A673 (cell line): ENCODE measurements at regions of chr12 and their contacts with region 1.

Region 1: DNA sequence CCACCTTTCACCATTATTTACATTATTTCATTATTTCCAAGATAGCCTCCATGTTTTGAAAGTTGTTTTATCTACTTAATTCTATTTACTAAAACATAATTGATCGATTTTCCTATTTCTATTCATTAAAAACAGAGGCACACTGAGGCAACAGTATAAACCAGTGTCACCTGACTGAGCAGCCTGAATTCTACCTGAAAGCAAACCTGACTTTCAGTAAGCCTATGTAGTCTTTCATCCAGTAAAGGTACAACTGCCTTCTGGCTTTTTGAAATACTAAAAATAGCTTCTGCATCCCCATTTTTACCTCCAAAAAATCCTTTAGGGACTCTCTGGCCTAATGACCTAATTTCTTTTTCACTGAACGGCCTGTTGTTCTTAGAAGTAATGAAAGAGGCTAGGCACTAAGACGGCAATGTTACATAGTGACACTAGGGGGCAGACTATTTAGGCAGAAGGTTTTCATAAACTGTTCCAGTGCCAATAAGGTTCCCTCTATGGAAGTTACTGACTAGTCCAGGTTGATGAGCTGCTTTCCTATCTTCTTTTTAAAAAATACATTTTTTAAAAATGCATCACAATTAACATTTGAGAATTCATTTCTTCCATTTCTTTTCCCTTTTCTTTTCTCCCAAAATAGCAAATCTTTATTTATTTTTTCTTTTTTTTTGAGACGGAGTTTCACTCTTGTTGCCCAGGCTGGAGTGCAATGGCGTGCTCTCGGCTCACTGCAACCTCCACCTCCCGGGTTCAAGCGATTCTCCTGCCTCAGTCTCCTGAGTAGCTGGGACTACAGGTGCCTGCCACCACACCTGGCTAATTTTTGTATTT is 17.5 kb downstream of the ANAPC5 start:
- DNase-seq: peak; percentile 80
- H3K4me3 ChIP-seq: no peak overlapping the region
- H3K27ac ChIP-seq: no peak overlapping the region
- H3K4me1 ChIP-seq: no peaks in the 10 kb centered on the region
- H3K27me3 ChIP-seq: no peaks in the 10 kb centered on the region
- CTCF ChIP-seq: peak; percentile 92

Region 2: GRCh38 chr12:121060149-121061001 is 274.4 kb before region 1 on chr12:
- CTCF ChIA-PET with region 1: no interaction called
- POLR2A ChIA-PET with region 1: no interaction called
- intact Hi-C with region 1: no loop called
- DNase-seq: peak; percentile 80
- H3K4me3 ChIP-seq: peak overlapping the region; percentile 27
- H3K27ac ChIP-seq: no peak overlapping the region
- H3K4me1 ChIP-seq: no peaks in the 10 kb centered on the region
- H3K27me3 ChIP-seq: no peaks in the 10 kb centered on the region
- CTCF ChIP-seq: peak; percentile 61

Region 3: DNA sequence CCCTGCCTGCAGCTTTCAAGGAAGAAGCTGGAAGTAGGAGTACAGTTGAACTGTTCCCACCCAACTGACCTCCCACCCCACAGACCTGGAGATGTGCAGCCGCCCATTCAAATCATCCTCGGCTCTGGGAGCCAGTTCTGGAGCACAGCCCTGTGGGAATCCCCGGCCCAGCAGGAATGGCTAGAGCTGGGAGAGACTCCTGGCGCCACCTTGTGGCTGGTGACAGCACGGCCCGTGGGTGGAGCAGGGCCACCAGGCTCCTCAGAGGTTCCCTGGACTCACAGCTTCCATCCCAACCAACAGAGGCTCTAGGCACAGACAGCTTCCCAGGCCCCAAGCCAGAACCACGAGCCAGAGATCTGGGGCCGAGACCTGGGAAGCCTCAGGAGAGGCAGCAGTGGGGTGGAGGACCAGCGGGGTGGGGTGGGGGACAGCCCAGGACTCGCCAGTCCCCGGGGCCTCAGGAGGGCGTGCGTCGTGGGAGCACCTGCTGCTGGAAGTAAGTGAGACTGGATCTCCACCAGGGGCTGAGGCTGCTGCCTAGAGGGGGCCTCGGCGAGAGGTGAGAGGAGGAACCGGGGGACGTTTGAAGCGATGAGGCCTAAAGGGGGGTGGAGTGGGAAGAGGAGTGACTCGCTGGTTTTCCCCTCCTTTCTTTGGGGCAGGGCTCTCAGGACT is 108.6 kb after region 1 on chr12:
- CTCF ChIA-PET with region 1: interaction called, 10 read pairs
- POLR2A ChIA-PET with region 1: no interaction called
- intact Hi-C with region 1: loop called (anchors 2 kb)
- DNase-seq: peak; percentile 81
- H3K4me3 ChIP-seq: no peak overlapping the region
- H3K27ac ChIP-seq: no peak overlapping the region
- H3K4me1 ChIP-seq: no peaks in the 10 kb centered on the region
- H3K27me3 ChIP-seq: no peaks in the 10 kb centered on the region
- CTCF ChIP-seq: peak; percentile 94

Region 4: DNA sequence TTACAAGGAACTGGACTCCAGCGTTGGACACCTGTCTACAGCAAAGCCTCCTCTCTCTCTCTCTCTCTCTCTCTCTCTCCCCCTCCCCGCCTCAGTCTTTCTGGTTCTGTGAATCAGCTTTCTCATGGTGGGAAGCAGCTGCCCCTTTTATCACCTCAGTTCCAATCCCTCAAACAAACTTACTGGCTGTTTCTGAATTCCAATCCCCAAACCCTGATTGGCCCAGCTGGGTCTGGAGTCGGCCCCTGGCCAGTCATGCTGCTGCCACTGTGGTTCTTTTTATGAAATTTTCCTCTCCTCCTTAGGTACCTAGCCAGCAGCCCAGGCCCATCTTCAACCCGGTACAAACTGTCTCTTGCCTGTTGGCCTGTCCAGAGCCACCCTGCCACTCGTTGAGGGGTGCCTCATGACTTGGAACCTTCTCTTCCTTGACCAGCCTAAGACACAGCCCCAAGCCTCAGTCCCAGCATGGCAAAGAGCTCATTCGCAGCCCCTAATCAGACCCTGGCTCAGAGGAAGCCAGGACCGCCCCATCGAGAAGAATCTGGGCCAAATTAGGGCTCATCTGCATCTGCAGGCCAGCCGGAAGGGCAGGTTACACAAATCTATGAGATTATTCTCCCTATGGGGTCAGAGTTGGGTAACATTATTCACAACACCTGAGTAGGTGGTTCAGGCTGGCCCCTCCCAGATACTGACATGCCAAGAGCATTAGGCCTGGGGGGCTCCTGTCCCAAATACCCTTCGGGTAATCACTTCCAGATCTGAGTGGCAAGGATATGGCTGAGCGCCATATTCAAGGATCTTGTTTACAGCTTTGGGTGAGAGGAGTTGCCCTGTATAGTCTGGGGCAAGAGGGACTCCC is 344.2 kb after region 1 on chr12:
- CTCF ChIA-PET with region 1: no interaction called
- POLR2A ChIA-PET with region 1: no interaction called
- intact Hi-C with region 1: loop called (anchors 5 kb)
- DNase-seq: no peak
- H3K4me3 ChIP-seq: no peak overlapping the region
- H3K27ac ChIP-seq: peak overlapping the region; percentile 44
- H3K4me1 ChIP-seq: no peaks in the 10 kb centered on the region
- H3K27me3 ChIP-seq: no peaks in the 10 kb centered on the region
- CTCF ChIP-seq: no peak